ENCODE measurements at regions of chr2 and their contacts with region 1.

Region 1: GRCh38 chr2:99559075-99559662 is 69.4 kb upstream of the REV1 start:
- DNase-seq: peak; percentile 83
- H3K4me3 ChIP-seq: no peak overlapping the region
- H3K27ac ChIP-seq: no peak overlapping the region
- H3K4me1 ChIP-seq: no peaks in the 10 kb centered on the region
- CTCF ChIP-seq: peak; percentile 100

Region 2: DNA sequence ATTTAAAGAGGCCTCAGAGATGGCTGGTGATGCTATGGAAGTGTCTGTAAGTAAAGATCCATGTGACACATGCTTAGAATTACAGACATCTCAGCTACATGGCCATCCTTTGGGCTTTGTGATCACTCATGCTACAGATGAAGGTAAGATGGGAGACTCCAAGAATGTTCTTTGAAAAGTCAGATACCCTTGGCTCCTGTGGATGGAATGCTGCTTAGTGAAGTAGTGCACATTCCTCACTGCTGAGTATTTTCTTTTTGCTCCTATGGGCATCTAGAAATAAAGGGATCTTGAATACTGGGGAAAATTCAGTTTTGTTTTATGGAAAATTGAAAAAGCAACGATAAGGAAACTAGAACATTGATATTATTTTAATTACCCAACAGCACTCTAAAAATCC is 14.1 kb before region 1 on chr2:
- CTCF ChIA-PET with region 1: no interaction called
- POLR2A ChIA-PET with region 1: no interaction called
- intact Hi-C with region 1: no loop called
- DNase-seq: no peak
- H3K4me3 ChIP-seq: no peak overlapping the region
- H3K27ac ChIP-seq: no peak overlapping the region
- H3K4me1 ChIP-seq: no peaks in the 10 kb centered on the region
- CTCF ChIP-seq: no peak

Region 3: GRCh38 chr2:99707592-99707991 is 148.4 kb after region 1 on chr2:
- CTCF ChIA-PET with region 1: no interaction called
- POLR2A ChIA-PET with region 1: no interaction called
- intact Hi-C with region 1: loop called (anchors 10 kb)
- DNase-seq: no peak
- H3K4me3 ChIP-seq: peak overlapping the region; percentile 50
- H3K27ac ChIP-seq: peak overlapping the region; percentile 51
- H3K4me1 ChIP-seq: peaks cover 39% of the 10 kb centered on the region
- CTCF ChIP-seq: no peak

Region 4: DNA sequence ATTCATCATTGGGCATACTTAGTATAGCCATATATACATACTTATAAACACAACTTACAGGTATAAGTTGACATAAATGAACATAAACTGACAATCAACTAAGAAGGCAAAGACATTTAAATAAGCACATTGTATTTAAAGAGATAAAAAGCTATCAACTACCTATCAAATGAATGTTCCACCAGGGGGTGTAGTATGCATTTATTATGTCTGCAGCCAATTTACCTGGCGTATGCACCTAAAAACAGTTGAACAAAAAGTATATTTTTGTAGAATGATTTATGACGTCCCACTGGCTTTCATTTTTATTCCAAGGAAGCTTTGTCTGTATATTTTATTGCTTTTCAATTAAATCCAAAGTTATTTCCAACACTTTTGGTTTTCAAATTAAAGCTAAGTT is 259.7 kb after region 1 on chr2:
- CTCF ChIA-PET with region 1: no interaction called
- POLR2A ChIA-PET with region 1: no interaction called
- intact Hi-C with region 1: loop called (anchors 5 kb)
- DNase-seq: peak; percentile 62
- H3K4me3 ChIP-seq: no peak overlapping the region
- H3K27ac ChIP-seq: no peak overlapping the region
- H3K4me1 ChIP-seq: no peaks in the 10 kb centered on the region
- CTCF ChIP-seq: peak; percentile 80

Region 5: GRCh38 chr2:99841749-99842148 is 282.6 kb after region 1 on chr2:
- CTCF ChIA-PET with region 1: no interaction called
- POLR2A ChIA-PET with region 1: no interaction called
- intact Hi-C with region 1: no loop called
- DNase-seq: no peak
- H3K4me3 ChIP-seq: no peak overlapping the region
- H3K27ac ChIP-seq: no peak overlapping the region
- H3K4me1 ChIP-seq: no peaks in the 10 kb centered on the region
- CTCF ChIP-seq: no peak

Region 6: GRCh38 chr2:100262555-100263320 is 703.6 kb after region 1 on chr2:
- CTCF ChIA-PET with region 1: no interaction called
- POLR2A ChIA-PET with region 1: interaction called, 4 read pairs
- intact Hi-C with region 1: loop called (anchors 5 kb)
- DNase-seq: peak; percentile 66
- H3K4me3 ChIP-seq: no peak overlapping the region
- H3K27ac ChIP-seq: no peak overlapping the region
- H3K4me1 ChIP-seq: peaks cover 8% of the 10 kb centered on the region
- CTCF ChIP-seq: peak; percentile 97